ENCODE measurements at regions of chr9 and their contacts with region 1.

Region 1: GRCh38 chr9:17810728-17811571 is 232.1 kb downstream of the SH3GL2 start:
- DNase-seq: peak; percentile 54
- ATAC-seq: no peak
- H3K4me3 Mint-ChIP-seq: no peak overlapping the region
- H3K27ac Mint-ChIP-seq: no peak overlapping the region
- H3K4me1 Mint-ChIP-seq: no peaks in the 10 kb centered on the region
- H3K27me3 Mint-ChIP-seq: no peaks in the 10 kb centered on the region

Region 2: GRCh38 chr9:17761984-17762676 is 48.8 kb before region 1 on chr9:
- CTCF ChIA-PET with region 1: no interaction called
- DNase-seq: no peak
- ATAC-seq: no peak
- H3K4me3 Mint-ChIP-seq: no peak overlapping the region
- H3K27ac Mint-ChIP-seq: no peak overlapping the region
- H3K4me1 Mint-ChIP-seq: no peaks in the 10 kb centered on the region
- H3K27me3 Mint-ChIP-seq: no peaks in the 10 kb centered on the region

Region 3: GRCh38 chr9:17994700-17995430 is 183.9 kb after region 1 on chr9:
- CTCF ChIA-PET with region 1: no interaction called
- DNase-seq: no peak
- ATAC-seq: no peak
- H3K4me3 Mint-ChIP-seq: no peak overlapping the region
- H3K27ac Mint-ChIP-seq: no peak overlapping the region
- H3K4me1 Mint-ChIP-seq: no peaks in the 10 kb centered on the region
- H3K27me3 Mint-ChIP-seq: no peaks in the 10 kb centered on the region

Region 4: DNA sequence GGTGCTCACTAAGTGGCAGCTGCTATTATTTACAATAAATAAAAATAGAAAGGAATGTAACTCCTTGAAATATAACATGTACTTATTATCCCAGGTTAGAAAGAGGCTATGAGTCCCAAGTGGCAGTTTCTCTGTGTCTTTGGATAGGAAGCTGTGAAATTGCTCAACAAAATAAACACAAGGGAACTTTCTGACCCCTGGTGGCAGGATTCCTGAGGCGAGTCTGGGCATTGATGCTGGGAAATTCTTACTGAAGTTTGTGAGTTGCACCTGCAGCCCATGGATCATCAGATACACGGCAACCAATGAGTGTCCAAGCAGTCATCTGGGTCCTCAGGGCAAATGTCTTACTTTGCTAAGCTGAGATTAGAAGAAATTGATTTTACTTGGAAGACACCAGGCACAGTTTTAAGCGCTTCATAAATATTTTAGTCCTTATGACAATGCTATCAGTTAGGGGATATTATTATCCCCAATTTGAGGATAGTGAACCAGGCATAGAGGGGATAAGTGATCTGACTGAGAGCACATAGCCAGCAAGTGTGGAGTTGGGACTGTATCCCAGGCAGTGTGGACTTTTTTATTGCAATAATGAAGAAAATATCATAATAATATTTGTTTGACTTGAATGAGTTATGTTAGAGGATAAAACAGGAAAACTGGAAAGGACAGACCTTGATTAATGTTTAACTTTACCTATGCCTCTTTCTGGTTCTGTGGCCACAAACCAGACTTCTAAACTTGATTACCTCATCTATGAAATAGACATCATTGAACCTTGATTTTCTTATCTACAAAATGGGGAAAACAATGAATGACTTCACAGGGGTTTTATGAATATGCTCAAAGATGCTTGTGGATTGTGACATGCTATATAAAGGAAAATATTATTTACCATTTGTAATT is 397.5 kb after region 1 on chr9:
- CTCF ChIA-PET with region 1: interaction called, 24 read pairs
- DNase-seq: no peak
- ATAC-seq: no peak
- H3K4me3 Mint-ChIP-seq: no peak overlapping the region
- H3K27ac Mint-ChIP-seq: no peak overlapping the region
- H3K4me1 Mint-ChIP-seq: no peaks in the 10 kb centered on the region
- H3K27me3 Mint-ChIP-seq: no peaks in the 10 kb centered on the region

Measured in activated CD8-positive, alpha-beta memory T cell treated with anti-CD3 and anti-CD28 coated beads, Interleukin-2, amount 10 ng/mL, durations not matched to agents 7 days and 5 days (primary cell).